T-cell (primary cell): ENCODE measurements at regions of chr11 and their contacts with region 1.

Region 1: GRCh38 chr11:36398231-36398953 is 102.3 kb downstream of the PRR5L start:
- DNase-seq: no peak
- ATAC-seq: no peak
- H3K4me3 ChIP-seq: no peak overlapping the region
- H3K4me3 Mint-ChIP-seq: no peak overlapping the region
- H3K27ac ChIP-seq: peak overlapping the region; percentile 0
- H3K27ac Mint-ChIP-seq: no peak overlapping the region
- H3K4me1 ChIP-seq: peaks cover 0 to 54% of the 10 kb centered on the region in 2 experiments
- H3K4me1 Mint-ChIP-seq: peaks cover 26 to 47% (median 28%) of the 10 kb centered on the region in 3 donors
- H3K27me3 ChIP-seq: peaks cover 0 to 9% of the 10 kb centered on the region in 2 experiments
- H3K27me3 Mint-ChIP-seq: no peaks in the 10 kb centered on the region

Region 2: GRCh38 chr11:36376009-36376887 is 22.1 kb before region 1 on chr11:
- CTCF ChIA-PET with region 1: interaction called in 1 of 2 experiments, 11 read pairs
- POLR2A ChIA-PET with region 1: interaction called in 1 of 2 experiments, 6 read pairs
- DNase-seq: peak in 2 of 35 experiments; percentile 16 to 37
- ATAC-seq: peak in 2 of 4 experiments; percentile 5 to 11
- H3K4me3 ChIP-seq: peak overlapping the region; percentile 74 to 82
- H3K4me3 Mint-ChIP-seq: peak overlapping the region; percentile 83 to 92 (median 87)
- H3K27ac ChIP-seq: peak overlapping the region; percentile 56
- H3K27ac Mint-ChIP-seq: peak overlapping the region; percentile 87 to 88
- H3K4me1 ChIP-seq: peaks cover 6 to 42% of the 10 kb centered on the region in 2 experiments
- H3K4me1 Mint-ChIP-seq: peaks cover 36 to 54% (median 40%) of the 10 kb centered on the region in 3 donors
- H3K27me3 ChIP-seq: peaks cover 0 to 28% of the 10 kb centered on the region in 2 experiments
- H3K27me3 Mint-ChIP-seq: peaks cover 35% of the 10 kb centered on the region in 2 donors